Gastrocnemius medialis (tissue), 4 donors: ENCODE measurements at regions of chr21 and their contacts with region 1.

Region 1: GRCh38 chr21:43659136-43660000 is at the starts of genes HSF2BP and RRP1B:
- DNase-seq: peak; percentile 51 to 73
- ATAC-seq: peak; percentile 92
- H3K4me3 ChIP-seq: peak within 1 kb of the TSS; percentile 74 to 98 (median 88)
- H3K27ac ChIP-seq: peak within 1 kb of the TSS; percentile 74 to 90 (median 88)
- H3K4me1 ChIP-seq: peaks cover 17 to 19% of the 10 kb centered on the region in 2 donors
- H3K27me3 ChIP-seq: no peaks in the 10 kb centered on the region
- CTCF ChIP-seq: peak in 4 of 5 experiments; percentile 7 to 37 (median 26)
- POLR2A ChIP-seq: peak; percentile 55 to 79
- total RNA-seq, gene HSF2BP: 0.63 TPM in 1 of 4 donors, not detected in the others
- total RNA-seq, gene RRP1B: 12.5 to 24.7 (median 18.9) TPM

Region 2: DNA sequence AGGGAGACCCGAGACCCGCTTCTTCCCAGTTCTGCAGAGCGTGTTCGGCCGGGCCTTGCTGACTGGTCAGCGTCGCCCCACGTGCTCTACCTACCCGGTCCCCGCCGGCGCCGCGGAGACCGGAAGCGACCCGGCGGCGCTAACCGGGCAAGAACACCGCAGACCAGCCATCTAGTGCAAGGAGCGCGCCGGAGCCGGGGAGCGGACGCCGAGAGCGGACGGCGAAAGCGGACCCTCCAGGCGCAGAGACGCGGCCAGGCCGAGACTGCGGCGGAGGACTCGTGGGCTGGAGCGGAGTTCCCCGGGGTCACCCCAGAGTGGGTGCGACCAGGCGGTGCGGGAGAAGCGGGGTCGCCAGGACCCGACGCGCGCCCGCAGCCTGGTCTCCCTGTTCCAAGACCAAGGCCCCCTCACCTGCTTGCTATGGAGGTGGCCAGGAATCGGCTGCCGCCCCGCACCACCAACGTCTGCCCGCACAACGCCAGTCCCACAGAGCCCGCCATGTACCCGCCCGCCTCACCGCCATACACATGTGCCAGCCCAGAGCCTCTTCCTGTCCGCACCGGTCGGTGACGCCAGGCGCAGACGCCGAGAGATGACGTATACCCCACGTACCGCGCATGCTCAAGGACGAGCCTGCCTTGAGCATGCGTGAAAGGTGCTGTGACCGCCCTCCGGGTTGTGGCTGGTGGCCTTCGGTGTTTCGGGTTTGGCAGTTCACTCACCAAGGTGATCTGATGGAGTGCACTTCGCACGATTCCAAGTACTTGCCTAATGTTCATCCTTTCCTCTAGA is 780.2 kb before region 1 on chr21 and contains the start of gene WDR4:
- in situ Hi-C with region 1: no loop called
- intact Hi-C with region 1: loop called (anchors 2 kb)
- DNase-seq: peak; percentile 95 to 97
- ATAC-seq: peak; percentile 97 to 99
- H3K4me3 ChIP-seq: peak within 1 kb of the TSS; percentile 86 to 94 (median 90)
- H3K27ac ChIP-seq: peak within 1 kb of the TSS; percentile 81 to 97 (median 90)
- H3K4me1 ChIP-seq: peaks cover 17% of the 10 kb centered on the region in 2 donors
- H3K27me3 ChIP-seq: no peaks in the 10 kb centered on the region
- CTCF ChIP-seq: no peak
- POLR2A ChIP-seq: peak; percentile 61 to 62
- total RNA-seq, gene WDR4: 1.9 to 13.3 (median 4.4) TPM

Region 3: DNA sequence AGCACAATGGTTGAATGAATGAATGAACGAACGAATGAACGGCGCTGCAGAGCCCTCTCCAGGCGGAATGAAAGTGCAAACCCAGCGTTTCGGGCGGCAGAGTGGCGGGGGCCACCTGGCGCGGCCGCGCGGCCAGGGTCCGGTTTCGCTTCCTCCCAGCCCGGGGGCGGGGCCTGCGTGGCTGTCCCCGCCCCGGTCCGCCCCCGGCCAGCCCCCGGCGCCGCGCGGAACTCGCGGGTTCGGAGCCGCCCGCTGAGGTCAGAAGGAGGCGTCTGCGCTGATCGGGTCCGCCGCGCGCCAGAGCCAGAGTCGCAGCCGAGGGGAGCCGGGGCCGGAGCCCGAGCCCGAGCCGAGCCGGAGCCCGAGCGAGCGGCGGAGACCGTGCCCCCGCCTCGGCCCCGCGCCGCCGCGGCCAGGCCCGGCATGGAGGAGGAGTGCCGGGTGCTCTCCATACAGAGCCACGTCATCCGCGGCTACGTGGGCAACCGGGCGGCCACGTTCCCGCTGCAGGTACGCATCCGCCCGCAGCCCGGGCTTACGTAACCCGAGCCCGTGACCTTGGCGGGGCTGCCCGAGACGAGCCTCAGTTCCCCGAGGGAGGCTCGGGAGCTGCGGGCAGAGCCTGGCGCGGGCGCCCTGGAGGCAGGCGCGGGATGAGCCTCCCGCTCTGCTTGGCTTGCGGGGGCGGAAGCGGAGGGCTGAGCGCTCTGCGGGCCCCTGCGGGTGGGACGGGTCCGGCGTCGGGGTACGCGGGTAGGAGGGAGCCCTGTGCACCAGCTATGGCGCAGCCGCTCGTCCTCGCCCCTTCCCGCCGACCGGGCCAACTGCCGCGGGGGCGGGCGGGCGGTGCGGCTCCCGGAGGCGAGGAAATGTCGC is 59.7 kb after region 1 on chr21 and contains the start of gene PDXK:
- in situ Hi-C with region 1: no loop called
- intact Hi-C with region 1: loop called (anchors 5 kb)
- DNase-seq: peak; percentile 72 to 77
- ATAC-seq: peak; percentile 89 to 90
- H3K4me3 ChIP-seq: peak within 1 kb of the TSS; percentile 59 to 97 (median 76)
- H3K27ac ChIP-seq: peak within 1 kb of the TSS; percentile 49 to 82 (median 76)
- H3K4me1 ChIP-seq: peaks cover 13 to 18% of the 10 kb centered on the region in 2 donors
- H3K27me3 ChIP-seq: no peaks in the 10 kb centered on the region
- CTCF ChIP-seq: no peak
- POLR2A ChIP-seq: peak; percentile 86 to 90
- total RNA-seq, gene PDXK: 12.4 to 39.2 (median 21.9) TPM

Region 4: GRCh38 chr21:43749651-43750259 is 90.4 kb after region 1 on chr21:
- in situ Hi-C with region 1: no loop called
- intact Hi-C with region 1: no loop called
- DNase-seq: no peak
- ATAC-seq: no peak
- H3K4me3 ChIP-seq: no peak overlapping the region
- H3K27ac ChIP-seq: no peak overlapping the region
- H3K4me1 ChIP-seq: no peaks in the 10 kb centered on the region
- H3K27me3 ChIP-seq: no peaks in the 10 kb centered on the region
- CTCF ChIP-seq: no peak
- POLR2A ChIP-seq: no peak

Region 5: GRCh38 chr21:43938751-43939442 is 279.5 kb after region 1 on chr21:
- in situ Hi-C with region 1: no loop called
- intact Hi-C with region 1: no loop called
- DNase-seq: peak; percentile 61 to 82
- ATAC-seq: peak; percentile 68 to 70
- H3K4me3 ChIP-seq: peak overlapping the region; percentile 43 to 50 (median 47)
- H3K27ac ChIP-seq: peak overlapping the region; percentile 70 to 98 (median 85)
- H3K4me1 ChIP-seq: peaks cover 33 to 56% of the 10 kb centered on the region in 2 donors
- H3K27me3 ChIP-seq: no peaks in the 10 kb centered on the region
- CTCF ChIP-seq: peak; percentile 91 to 97 (median 94)
- POLR2A ChIP-seq: peak in 1 of 2 donors; percentile 33